Activated T-helper 1 cell treated with anti-CD3 and anti-CD28 coated beads, Interleukin-12 subunit alpha, Interleukin-12 subunit beta, Interleukin-2, Interleukin-4 antibody, amounts not matched to agents 30 ng/mL and 10 ng/mL and 1 ng/mL, durations not matched to agents 14 hours and 24 hours and 36 hours (primary cell): ENCODE measurements at regions of chr6 and their contacts with region 1.

Region 1: DNA sequence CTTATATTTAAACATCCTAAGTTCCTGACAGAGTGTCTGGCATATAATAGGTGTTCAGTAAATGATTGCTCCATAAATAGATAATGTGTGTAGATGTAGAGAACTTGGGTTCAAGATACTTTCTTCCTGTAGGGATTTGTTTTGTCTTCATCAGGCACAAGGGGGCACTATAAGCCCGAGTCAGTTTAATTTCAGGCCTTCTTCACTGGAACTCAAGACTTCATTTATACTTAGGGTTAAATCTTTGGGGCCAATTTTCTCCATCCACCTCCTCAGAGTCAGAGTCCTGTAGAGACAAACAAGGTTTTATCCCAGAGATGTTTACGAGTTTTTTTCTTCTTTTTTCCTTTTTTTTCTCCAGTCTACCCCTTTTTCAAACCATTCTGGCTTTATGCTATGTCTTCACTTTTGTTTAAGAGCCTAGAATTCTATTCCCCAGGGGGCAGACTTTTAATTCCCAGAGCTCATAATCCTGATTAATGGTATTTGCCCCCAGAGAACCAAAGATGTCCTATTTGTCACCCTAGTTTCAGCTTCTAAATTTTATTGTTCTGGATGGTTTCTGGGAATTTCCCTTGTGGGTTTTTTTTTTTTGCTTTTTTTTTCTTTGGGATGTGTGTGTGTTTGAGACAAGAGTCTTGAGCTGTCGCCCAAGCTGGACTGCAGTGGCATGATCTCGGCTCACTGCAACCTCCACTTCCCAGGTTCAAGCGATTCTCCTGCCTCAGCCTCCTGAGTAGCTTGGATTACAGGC is 88.4 kb downstream of the HFE start:
- DNase-seq: peak; percentile 58
- H3K4me3 Mint-ChIP-seq: peak overlapping the region; percentile 19
- H3K27ac Mint-ChIP-seq: peak overlapping the region; percentile 79
- H3K4me1 Mint-ChIP-seq: peaks cover 51% of the 10 kb centered on the region
- H3K27me3 Mint-ChIP-seq: no peaks in the 10 kb centered on the region

Region 2: GRCh38 chr6:25476831-25477590 is 698.6 kb before region 1 on chr6:
- intact Hi-C with region 1: no loop called
- DNase-seq: no peak
- H3K4me3 Mint-ChIP-seq: no peak overlapping the region
- H3K27ac Mint-ChIP-seq: no peak overlapping the region
- H3K4me1 Mint-ChIP-seq: no peaks in the 10 kb centered on the region
- H3K27me3 Mint-ChIP-seq: no peaks in the 10 kb centered on the region

Region 3: GRCh38 chr6:25874822-25875562 is 300.6 kb before region 1 on chr6:
- intact Hi-C with region 1: no loop called
- DNase-seq: no peak
- H3K4me3 Mint-ChIP-seq: peak overlapping the region; percentile 6
- H3K27ac Mint-ChIP-seq: no peak overlapping the region
- H3K4me1 Mint-ChIP-seq: peaks cover 43% of the 10 kb centered on the region
- H3K27me3 Mint-ChIP-seq: peaks cover 6% of the 10 kb centered on the region

Region 4: DNA sequence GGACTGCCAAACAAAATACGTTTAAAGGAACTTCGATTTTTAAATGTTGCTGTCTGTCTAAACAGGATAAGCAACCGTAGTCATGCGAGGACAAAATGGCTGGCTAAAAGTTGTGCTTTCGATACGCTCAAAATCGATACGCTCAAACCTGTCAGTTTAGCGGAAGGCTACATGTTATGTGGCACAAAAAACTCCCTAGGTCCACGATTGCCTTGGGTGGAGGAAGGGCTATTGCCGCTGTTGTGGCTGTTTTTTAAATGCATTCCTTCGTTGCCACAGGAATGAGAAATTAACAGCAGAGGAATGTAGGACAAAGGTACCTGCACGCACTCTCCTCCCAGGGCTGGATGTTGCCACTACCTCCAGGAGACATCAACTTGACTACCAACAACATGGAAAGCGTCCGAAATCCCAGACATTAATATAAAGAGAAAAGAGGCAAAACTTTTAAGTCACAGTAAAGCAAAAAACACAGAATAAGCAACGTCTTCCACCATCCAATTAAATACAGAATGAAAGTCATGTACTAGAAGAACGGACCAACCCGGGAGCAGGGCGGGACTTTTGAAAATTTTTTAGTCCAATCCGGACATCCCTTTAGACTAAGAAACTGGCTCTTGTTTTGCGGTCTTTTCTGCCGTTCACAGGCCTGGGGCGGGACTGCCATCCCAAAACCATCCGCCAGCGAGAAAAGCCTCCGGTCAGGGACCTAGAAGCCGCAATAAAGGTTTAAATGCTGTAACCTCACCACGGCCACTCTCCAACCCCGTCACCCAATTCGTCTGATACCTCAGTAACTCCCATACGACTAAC is 120.5 kb before region 1 on chr6:
- intact Hi-C with region 1: loop called (anchors 5 kb)
- DNase-seq: peak; percentile 83
- H3K4me3 Mint-ChIP-seq: peak overlapping the region; percentile 91
- H3K27ac Mint-ChIP-seq: peak overlapping the region; percentile 99
- H3K4me1 Mint-ChIP-seq: peaks cover 42% of the 10 kb centered on the region
- H3K27me3 Mint-ChIP-seq: peaks cover 3% of the 10 kb centered on the region

Region 5: GRCh38 chr6:26216356-26216885 is 40.8 kb after region 1 on chr6:
- intact Hi-C with region 1: loop called (anchors 1 kb)
- DNase-seq: peak; percentile 86
- H3K4me3 Mint-ChIP-seq: no peak overlapping the region
- H3K27ac Mint-ChIP-seq: no peak overlapping the region
- H3K4me1 Mint-ChIP-seq: peaks cover 11% of the 10 kb centered on the region
- H3K27me3 Mint-ChIP-seq: no peaks in the 10 kb centered on the region

Region 6: DNA sequence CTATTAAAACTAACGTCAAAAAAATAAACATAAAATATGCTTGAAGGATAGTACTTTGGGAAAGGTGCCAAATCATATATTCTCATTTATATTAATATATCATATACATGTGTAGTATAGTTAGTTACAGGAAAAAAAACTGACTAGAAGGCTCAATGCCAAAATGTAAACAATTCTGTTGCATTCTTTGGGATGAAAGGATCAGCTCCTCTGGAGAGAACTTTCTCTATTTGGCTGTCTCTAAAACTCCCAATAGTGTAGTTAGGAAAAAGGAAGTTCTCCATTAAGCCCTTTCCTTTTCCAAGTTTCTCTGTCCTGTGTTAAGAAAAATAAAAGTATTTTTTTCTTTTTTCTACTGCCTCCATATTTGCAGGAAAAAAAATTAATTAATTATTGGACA is 102.9 kb after region 1 on chr6:
- intact Hi-C with region 1: no loop called
- DNase-seq: no peak
- H3K4me3 Mint-ChIP-seq: no peak overlapping the region
- H3K27ac Mint-ChIP-seq: no peak overlapping the region
- H3K4me1 Mint-ChIP-seq: peaks cover 42% of the 10 kb centered on the region
- H3K27me3 Mint-ChIP-seq: peaks cover 2% of the 10 kb centered on the region

Region 7: GRCh38 chr6:26312501-26313390 is 137.1 kb after region 1 on chr6:
- intact Hi-C with region 1: loop called (anchors 5 kb)
- DNase-seq: peak; percentile 72
- H3K4me3 Mint-ChIP-seq: peak overlapping the region; percentile 84
- H3K27ac Mint-ChIP-seq: peak overlapping the region; percentile 92
- H3K4me1 Mint-ChIP-seq: peaks cover 51% of the 10 kb centered on the region
- H3K27me3 Mint-ChIP-seq: no peaks in the 10 kb centered on the region

Region 8: GRCh38 chr6:26553635-26554446 is 378.2 kb after region 1 on chr6:
- intact Hi-C with region 1: loop called (anchors 5 kb)
- DNase-seq: peak; percentile 72
- H3K4me3 Mint-ChIP-seq: no peak overlapping the region
- H3K27ac Mint-ChIP-seq: no peak overlapping the region
- H3K4me1 Mint-ChIP-seq: peaks cover 18% of the 10 kb centered on the region
- H3K27me3 Mint-ChIP-seq: peaks cover 2% of the 10 kb centered on the region

Region 9: GRCh38 chr6:27772261-27773001 is 1596.8 kb after region 1 on chr6:
- intact Hi-C with region 1: no loop called
- DNase-seq: peak; percentile 82
- H3K4me3 Mint-ChIP-seq: no peak overlapping the region
- H3K27ac Mint-ChIP-seq: peak overlapping the region; percentile 56
- H3K4me1 Mint-ChIP-seq: peaks cover 19% of the 10 kb centered on the region
- H3K27me3 Mint-ChIP-seq: peaks cover 22% of the 10 kb centered on the region